ENCODE measurements at regions of chr17 and their contacts with region 1.

Region 1: DNA sequence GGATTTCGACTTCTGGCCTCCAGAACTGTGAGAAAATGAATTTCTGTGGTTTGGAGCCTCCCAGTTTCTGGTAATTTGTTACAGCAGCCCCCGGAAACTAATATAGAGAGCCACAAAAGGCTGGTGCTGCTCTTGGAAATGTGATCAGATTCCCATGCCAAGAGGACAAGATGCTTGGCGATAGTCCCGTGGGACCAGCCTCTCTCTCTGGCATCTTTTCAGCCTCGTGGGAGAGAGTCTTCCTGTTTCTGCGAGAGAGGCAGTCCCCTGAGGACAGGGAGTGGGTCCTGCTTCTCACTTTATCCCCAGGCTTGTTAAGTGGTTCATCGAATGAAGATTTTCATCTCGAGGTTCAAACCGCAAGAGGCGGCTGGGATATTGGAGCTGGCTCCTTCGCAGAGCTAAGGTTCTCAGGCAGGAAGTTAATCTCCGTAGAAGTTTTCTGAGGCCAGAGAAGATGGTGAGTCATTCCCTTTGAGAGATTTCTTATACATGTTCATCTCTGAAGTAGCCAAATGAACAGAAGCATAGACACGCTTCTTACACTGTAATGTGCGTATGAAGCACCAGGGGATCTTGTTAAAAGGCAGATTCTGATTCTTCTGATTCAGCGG is 211.6 kb upstream of the SDK2 start:
- DNase-seq: peak; percentile 32
- H3K4me3 ChIP-seq: no peak overlapping the region
- H3K27ac ChIP-seq: no peak overlapping the region
- H3K4me1 ChIP-seq: no peaks in the 10 kb centered on the region
- H3K27me3 ChIP-seq: no peaks in the 10 kb centered on the region
- CTCF ChIP-seq: no peak

Region 2: GRCh38 chr17:73820686-73821448 is 35.0 kb before region 1 on chr17:
- CTCF ChIA-PET with region 1: no interaction called
- dilution Hi-C with region 1: loop called (anchors 5 kb)
- in situ Hi-C with region 1: no loop called
- intact Hi-C with region 1: no loop called
- DNase-seq: no peak
- H3K4me3 ChIP-seq: no peak overlapping the region
- H3K27ac ChIP-seq: no peak overlapping the region
- H3K4me1 ChIP-seq: no peaks in the 10 kb centered on the region
- H3K27me3 ChIP-seq: no peaks in the 10 kb centered on the region
- CTCF ChIP-seq: no peak